HEK293T (cell line): ENCODE measurements at regions of chr4 and their contacts with region 1.

Region 1: GRCh38 chr4:152339576-152339975 is 196.3 kb downstream of the FBXW7 start:
- DNase-seq: no peak

Region 2: GRCh38 chr4:152265149-152265621 is 74.4 kb before region 1 on chr4:
- CTCF ChIA-PET with region 1: no interaction called
- POLR2A ChIA-PET with region 1: no interaction called
- DNase-seq: peak; percentile 44

Region 3: DNA sequence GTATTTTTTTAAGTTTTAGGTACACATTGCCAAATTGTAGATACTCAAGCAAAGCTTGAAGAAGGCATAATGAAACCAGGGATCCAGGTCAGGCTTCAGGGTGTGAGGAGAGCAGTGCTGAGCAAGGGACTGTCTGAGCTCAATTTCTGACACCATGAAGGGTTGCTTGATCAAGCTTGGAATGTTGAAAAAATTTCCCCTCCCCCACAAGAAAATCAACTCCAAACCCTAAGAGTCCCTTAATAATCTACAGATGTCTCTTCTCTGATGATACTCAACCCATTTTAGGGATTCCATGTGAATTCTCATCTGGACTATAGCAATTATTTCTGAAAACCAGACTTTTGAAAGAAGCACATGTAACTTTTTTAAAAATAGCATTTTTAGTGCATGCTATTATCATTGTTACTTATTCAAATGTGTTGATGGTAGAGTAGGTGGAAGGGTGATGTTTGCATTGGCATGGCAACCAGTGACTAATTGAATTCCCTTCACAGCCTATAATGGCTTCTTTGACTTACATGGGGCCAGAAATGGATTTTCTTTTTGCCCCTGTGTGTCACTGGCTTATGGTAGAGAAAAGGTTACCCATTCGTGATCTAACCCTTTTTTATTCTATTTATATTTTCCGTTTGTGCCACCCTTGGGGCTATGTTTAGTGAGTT is 55.6 kb before region 1 on chr4:
- CTCF ChIA-PET with region 1: no interaction called
- POLR2A ChIA-PET with region 1: no interaction called
- DNase-seq: no peak

Region 4: DNA sequence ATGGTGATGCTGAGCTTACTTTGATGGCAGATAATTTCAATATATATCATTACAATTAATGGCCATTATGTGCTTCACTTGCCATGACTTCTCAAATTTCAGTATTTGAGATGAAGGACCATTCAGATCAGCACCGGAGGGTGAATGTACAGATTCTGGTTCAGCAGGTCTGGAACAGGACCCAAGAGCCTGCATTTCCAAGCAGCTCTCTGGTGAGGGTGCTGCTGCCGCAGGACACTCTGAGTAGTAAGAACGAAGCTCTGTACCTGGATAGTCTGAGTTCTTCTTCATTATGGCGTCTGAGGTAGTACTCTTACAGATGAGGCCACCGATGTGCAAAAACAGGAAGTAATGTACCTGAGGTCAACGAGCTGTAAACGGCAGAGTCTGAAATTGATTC is 31.9 kb before region 1 on chr4:
- CTCF ChIA-PET with region 1: interaction called, 11 read pairs
- POLR2A ChIA-PET with region 1: no interaction called
- DNase-seq: no peak